ENCODE measurements at regions of chr20 and their contacts with region 1.

Region 1: GRCh38 chr20:13546497-13547131 is 92.1 kb downstream of the TASP1 start:
- DNase-seq: peak; percentile 33
- H3K4me3 ChIP-seq: peak overlapping the region in 1 of 2 experiments; percentile 9; a peak in 1 of 4 replicates
- H3K27ac ChIP-seq: no peak overlapping the region
- H3K4me1 ChIP-seq: no peaks in the 10 kb centered on the region
- H3K27me3 ChIP-seq: no peaks in the 10 kb centered on the region
- CTCF ChIP-seq: peak; percentile 92
- EP300 ChIP-seq: no peak
- RAD21 ChIP-seq: peak; percentile 86

Region 2: GRCh38 chr20:13325033-13325432 is 221.6 kb before region 1 on chr20:
- CTCF ChIA-PET with region 1: interaction called, 25 read pairs
- POLR2A ChIA-PET with region 1: no interaction called
- DNase-seq: peak; percentile 38
- H3K4me3 ChIP-seq: no peak overlapping the region
- H3K27ac ChIP-seq: no peak overlapping the region
- H3K4me1 ChIP-seq: no peaks in the 10 kb centered on the region; a peak in 1 of 4 replicates
- H3K27me3 ChIP-seq: no peaks in the 10 kb centered on the region
- CTCF ChIP-seq: peak; percentile 62
- EP300 ChIP-seq: no peak
- RAD21 ChIP-seq: peak; percentile 65

Region 3: GRCh38 chr20:13474467-13474866 is 72.1 kb before region 1 on chr20:
- CTCF ChIA-PET with region 1: interaction called, 13 read pairs
- POLR2A ChIA-PET with region 1: no interaction called
- DNase-seq: no peak
- H3K4me3 ChIP-seq: no peak overlapping the region
- H3K27ac ChIP-seq: no peak overlapping the region
- H3K4me1 ChIP-seq: no peaks in the 10 kb centered on the region
- H3K27me3 ChIP-seq: no peaks in the 10 kb centered on the region
- CTCF ChIP-seq: no peak
- EP300 ChIP-seq: no peak
- RAD21 ChIP-seq: no peak

Region 4: DNA sequence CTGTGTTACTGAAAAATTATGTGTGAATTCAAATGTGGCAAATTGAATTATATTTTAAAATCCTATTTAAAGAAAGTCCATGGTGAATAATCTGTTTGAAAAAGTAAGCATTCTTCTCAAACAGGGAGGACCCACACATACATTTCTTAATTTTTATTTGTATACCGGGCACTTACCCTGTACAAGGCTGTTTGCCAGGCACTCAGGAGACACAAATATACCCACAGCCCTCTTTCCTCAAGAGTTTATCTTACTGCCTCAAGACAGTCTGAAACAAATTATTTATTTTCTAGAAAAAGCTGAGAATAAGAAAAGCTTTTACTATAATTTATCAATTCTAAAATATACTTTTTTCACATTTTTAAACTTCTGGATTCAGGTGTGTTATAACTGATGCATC is 22.3 kb before region 1 on chr20:
- CTCF ChIA-PET with region 1: interaction called, 19 read pairs
- POLR2A ChIA-PET with region 1: no interaction called
- DNase-seq: no peak
- H3K4me3 ChIP-seq: no peak overlapping the region
- H3K27ac ChIP-seq: peak overlapping the region in 1 of 2 experiments; percentile 63; a peak in 2 of 4 replicates
- H3K4me1 ChIP-seq: peaks cover 0 to 5% of the 10 kb centered on the region in 2 experiments; a peak in 2 of 4 replicates
- H3K27me3 ChIP-seq: no peaks in the 10 kb centered on the region
- CTCF ChIP-seq: no peak
- EP300 ChIP-seq: no peak
- RAD21 ChIP-seq: no peak

Region 5: GRCh38 chr20:13563854-13564253 is 17.2 kb after region 1 on chr20:
- CTCF ChIA-PET with region 1: interaction called, 54 read pairs
- POLR2A ChIA-PET with region 1: no interaction called
- DNase-seq: no peak
- H3K4me3 ChIP-seq: no peak overlapping the region
- H3K27ac ChIP-seq: no peak overlapping the region
- H3K4me1 ChIP-seq: no peaks in the 10 kb centered on the region
- H3K27me3 ChIP-seq: no peaks in the 10 kb centered on the region
- CTCF ChIP-seq: no peak
- EP300 ChIP-seq: no peak
- RAD21 ChIP-seq: no peak

Region 6: DNA sequence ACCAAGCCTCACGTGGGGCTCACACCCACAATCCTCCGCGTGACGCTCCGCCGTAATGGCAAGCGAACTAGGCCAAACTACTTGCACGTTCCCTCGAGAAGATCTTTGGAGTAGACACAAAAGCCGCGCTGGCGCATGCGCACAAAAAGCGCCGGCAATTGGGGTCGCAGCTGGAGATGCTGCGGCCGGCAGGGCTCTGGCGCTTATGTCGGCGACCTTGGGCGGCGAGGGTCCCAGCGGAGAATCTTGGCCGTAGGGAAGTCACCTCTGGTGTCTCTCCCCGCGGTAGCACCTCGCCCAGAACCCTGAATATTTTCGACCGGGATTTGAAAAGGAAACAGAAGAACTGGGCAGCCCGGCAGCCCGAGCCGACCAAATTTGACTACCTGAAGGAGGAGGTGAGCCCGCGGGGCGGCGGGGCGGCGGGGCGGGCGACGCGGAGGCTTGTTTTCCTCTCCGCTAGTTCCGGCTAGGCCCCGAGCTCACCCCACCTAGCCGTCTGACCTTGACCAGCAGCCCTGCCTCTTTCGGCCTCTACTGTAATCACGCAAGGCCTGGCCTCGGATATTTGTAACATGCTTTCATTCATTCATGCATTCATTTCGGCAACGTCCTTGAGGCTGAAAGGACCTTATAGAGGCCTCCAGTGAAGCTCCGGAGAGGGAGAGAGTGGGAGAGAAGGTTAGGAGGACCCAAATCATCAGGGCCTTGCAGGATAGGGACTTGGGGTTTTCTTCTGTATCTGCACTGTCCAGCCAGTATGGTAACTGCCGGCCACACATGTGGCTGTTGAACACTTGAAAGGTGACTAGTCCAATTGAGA is 238.5 kb after region 1 on chr20 and contains the starts of genes ESF1 and NDUFAF5:
- CTCF ChIA-PET with region 1: interaction called, 12 read pairs
- POLR2A ChIA-PET with region 1: no interaction called
- DNase-seq: peak; percentile 91
- H3K4me3 ChIP-seq: peak within 1 kb of the TSS; percentile 89
- H3K27ac ChIP-seq: peak within 1 kb of the TSS; percentile 71 to 89
- H3K4me1 ChIP-seq: peaks cover 7 to 14% of the 10 kb centered on the region in 2 experiments
- H3K27me3 ChIP-seq: no peaks in the 10 kb centered on the region
- CTCF ChIP-seq: no peak
- EP300 ChIP-seq: peak in 1 of 2 experiments; percentile 29; a peak in 1 of 4 replicates
- RAD21 ChIP-seq: no peak
- polyA plus RNA-seq, gene ESF1: 1.4 and 1.8 TPM in 2 replicates
- polyA plus RNA-seq, gene NDUFAF5: 8.0 TPM in 2 replicates

Region 7: DNA sequence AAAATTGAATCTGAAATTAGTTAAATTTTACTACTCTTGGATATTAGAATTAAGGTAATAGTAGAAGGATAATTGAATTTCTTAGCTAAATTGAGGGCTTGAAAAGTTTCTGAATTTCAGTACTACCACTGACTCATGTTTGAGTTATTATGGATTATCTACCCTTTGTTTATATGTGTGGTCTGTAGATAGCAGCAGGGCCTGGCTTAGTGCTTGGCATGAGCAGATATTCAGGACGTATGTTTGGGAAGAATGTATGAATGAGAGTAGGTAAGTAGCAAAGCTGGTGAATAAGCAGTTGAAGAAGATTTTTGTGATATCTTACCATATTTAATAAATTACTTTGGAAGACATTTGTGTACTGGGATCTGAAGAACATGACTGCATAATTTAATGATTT is 601.4 kb after region 1 on chr20:
- CTCF ChIA-PET with region 1: no interaction called
- POLR2A ChIA-PET with region 1: no interaction called
- DNase-seq: no peak
- H3K4me3 ChIP-seq: no peak overlapping the region
- H3K27ac ChIP-seq: no peak overlapping the region
- H3K4me1 ChIP-seq: peaks cover 0 to under 1% of the 10 kb centered on the region in 2 experiments; a peak in 1 of 4 replicates
- H3K27me3 ChIP-seq: no peaks in the 10 kb centered on the region
- CTCF ChIP-seq: no peak
- EP300 ChIP-seq: no peak
- RAD21 ChIP-seq: no peak